ENCODE measurements at regions of chr9 and their contacts with region 1.

Region 1: DNA sequence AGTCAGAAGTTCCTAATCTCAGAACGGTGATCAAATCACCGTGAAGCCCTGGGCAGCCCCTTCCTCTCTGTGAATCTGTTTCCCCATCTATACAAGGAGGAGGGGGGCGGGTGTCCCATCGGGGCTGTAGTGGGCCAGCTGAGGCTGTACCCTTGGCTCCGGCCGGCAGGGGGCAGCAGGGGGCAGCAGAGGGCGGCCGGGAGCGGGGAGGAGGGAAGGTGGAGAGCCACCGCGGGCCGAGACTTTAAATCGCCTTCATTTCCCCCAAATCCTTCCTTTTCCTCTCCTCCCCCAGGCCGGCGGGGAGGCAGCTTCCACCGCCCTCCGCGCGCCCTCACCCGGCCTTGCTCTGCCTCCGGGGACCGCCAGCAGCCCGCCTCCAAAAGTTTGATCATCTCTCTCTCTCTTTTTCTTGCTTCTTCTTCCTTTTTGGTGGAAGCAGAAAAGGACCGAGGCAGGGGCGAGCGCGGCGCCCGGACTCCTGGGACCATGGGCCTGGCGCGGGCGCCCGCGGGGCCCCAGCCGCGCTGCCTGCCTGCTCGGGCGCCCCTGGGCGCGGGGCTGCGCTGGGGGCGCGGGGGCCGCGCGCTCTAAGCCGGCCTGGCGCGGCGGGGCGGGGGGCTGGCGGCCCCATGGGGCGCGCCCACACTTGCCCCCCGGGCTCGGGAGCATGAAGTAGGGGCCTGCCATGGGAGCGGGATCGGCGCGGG is at the start of gene COL27A1:
- DNase-seq: peak; percentile 57 to 76 (median 59)
- H3K4me3 ChIP-seq: peak within 1 kb of the TSS; percentile 32
- H3K4me3 Mint-ChIP-seq: peak within 1 kb of the TSS; percentile 83 to 95 (median 89)
- H3K27ac ChIP-seq: no peak within 1 kb of the TSS
- H3K27ac Mint-ChIP-seq: peak within 1 kb of the TSS in 7 of 8 donors; percentile 34 to 81 (median 64)
- H3K4me1 ChIP-seq: peaks cover 10% of the 10 kb centered on the region
- H3K4me1 Mint-ChIP-seq: peaks cover 21 to 31% (median 21%) of the 10 kb centered on the region in 3 donors
- H3K27me3 ChIP-seq: peaks cover 19% of the 10 kb centered on the region
- H3K27me3 Mint-ChIP-seq: peaks cover 31 to 53% of the 10 kb centered on the region in 2 donors
- total RNA-seq, gene COL27A1: 0.86 to 1.6 TPM

Region 2: DNA sequence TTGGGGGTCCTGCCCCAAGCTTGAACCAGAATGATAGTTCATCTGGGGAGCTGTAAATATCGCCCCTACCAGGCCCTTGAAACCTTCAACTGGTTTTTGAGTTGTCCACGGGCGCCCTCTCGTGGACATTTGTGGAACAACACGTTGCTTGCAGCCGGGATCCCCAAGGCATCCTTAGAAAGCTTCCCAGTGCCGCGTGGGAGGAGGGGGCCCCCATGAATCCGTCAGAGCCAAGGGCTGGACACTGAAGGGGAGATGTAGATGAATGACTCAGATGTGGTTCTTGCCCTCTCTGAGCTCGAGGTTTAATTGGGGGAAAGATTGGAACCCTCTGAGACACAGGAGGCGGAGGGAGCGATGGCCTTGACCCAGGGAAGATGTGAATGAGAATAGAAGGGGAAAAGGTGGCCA is 135.7 kb after region 1 on chr9:
- CTCF ChIA-PET with region 1: interaction called, 16 read pairs
- POLR2A ChIA-PET with region 1: no interaction called
- DNase-seq: peak; percentile 42 to 77 (median 58)
- H3K4me3 ChIP-seq: no peak overlapping the region
- H3K4me3 Mint-ChIP-seq: no peak overlapping the region
- H3K27ac ChIP-seq: no peak overlapping the region
- H3K27ac Mint-ChIP-seq: peak overlapping the region in 4 of 8 donors; percentile 1 to 86 (median 39)
- H3K4me1 ChIP-seq: no peaks in the 10 kb centered on the region
- H3K4me1 Mint-ChIP-seq: peaks cover 0 to 3% (median 0%) of the 10 kb centered on the region in 3 donors
- H3K27me3 ChIP-seq: peaks cover 4% of the 10 kb centered on the region
- H3K27me3 Mint-ChIP-seq: peaks cover 2 to 8% of the 10 kb centered on the region in 2 donors

Measured in CD8-positive, alpha-beta memory T cell (primary cell).